ENCODE measurements at regions of chr19 and their contacts with region 1.

Region 1: DNA sequence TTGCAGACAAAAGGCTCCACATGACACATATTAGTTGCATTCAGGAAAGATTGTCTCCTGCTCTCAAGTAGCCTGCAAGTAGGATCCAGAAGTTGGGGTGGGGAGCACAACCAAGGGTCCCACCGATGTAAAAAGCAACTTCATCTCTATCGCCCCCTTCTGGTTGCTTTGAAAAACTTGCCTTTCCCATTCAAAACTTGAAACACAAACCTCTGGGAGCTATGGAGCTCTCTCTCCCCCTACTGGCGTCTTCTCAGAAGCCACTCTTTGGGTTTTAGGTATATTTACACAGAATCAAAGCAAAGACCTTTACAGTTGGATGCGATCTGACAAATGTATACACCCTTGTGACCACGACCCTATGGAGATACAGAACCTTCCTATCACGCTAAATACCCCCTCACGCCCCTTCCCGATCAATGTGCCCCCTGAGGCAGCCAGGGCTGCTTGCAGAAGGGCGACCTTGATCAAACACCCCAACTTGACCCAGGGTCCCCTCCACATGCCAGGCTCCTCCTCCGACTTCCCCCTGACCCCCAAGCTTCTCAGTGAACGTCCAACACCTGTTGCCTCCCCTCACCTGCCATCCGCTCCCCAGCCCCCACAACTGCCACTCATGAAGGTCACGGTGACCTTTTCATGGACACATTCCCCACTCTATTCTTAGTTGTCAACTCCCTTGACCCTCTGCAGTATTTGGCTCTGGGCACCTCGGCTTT is 10.1 kb downstream of the NOSIP start:
- DNase-seq: peak in 9 of 10 donors; percentile 62 to 88 (median 79)
- ATAC-seq: peak; percentile 13 to 14
- H3K4me3 Mint-ChIP-seq: peak overlapping the region in 9 of 10 donors; percentile 29 to 84 (median 68)
- H3K27ac Mint-ChIP-seq: peak overlapping the region; percentile 83 to 99 (median 96)
- H3K4me1 Mint-ChIP-seq: peaks cover 19 to 59% (median 56%) of the 10 kb centered on the region in 4 donors
- H3K27me3 Mint-ChIP-seq: peaks cover 0 to 2% (median 0%) of the 10 kb centered on the region in 5 donors

Region 2: DNA sequence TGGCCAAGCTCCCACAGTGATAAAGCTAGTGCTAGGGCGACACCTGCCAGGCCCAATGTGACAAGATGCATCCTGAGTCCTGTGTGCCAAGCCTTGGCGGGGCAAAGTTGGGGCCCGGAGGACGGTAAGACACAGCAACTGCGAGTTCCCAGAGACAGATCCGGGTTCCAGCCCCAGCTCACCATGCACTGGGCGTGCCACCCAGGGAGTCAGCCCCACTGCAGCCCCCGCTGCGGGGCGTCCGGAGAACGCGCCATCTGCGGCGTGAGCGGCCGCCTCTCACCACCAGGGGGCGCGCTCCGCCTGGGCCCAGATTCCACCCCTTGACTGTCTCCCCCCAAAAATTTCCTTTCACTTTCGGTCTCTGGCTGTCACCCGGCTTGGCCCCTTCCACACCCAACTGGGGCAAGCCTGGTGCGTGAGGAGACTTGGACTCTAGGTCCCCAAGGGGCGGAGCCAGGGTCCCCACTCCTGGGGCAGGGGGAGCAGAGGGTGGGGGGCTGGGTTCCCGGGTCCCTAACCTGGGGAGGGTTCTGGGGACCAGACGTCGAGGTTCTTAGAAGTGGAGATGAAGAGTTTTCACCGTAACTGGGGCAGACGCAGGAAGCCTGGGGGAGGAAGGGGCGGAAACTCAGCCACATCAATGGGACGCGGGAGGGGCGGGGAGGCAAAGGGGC is 96.3 kb before region 1 on chr19 and contains the start of gene FLT3LG:
- POLR2A ChIA-PET with region 1: interaction called, 12 read pairs
- DNase-seq: peak; percentile 87 to 98 (median 94)
- ATAC-seq: peak; percentile 46 to 62
- H3K4me3 Mint-ChIP-seq: peak within 1 kb of the TSS; percentile 93 to 99 (median 96)
- H3K27ac Mint-ChIP-seq: peak within 1 kb of the TSS; percentile 92 to 100 (median 98)
- H3K4me1 Mint-ChIP-seq: peaks cover 28 to 72% (median 65%) of the 10 kb centered on the region in 4 donors
- H3K27me3 Mint-ChIP-seq: no peaks in the 10 kb centered on the region
- polyA plus RNA-seq, gene FLT3LG: 108 to 205 (median 166) TPM

Region 3: GRCh38 chr19:49512970-49513745 is 57.1 kb before region 1 on chr19:
- POLR2A ChIA-PET with region 1: interaction called, 10 read pairs
- DNase-seq: peak in 1 of 10 donors; percentile 27
- ATAC-seq: peak; percentile 73 to 81
- H3K4me3 Mint-ChIP-seq: peak overlapping the region; percentile 79 to 95 (median 90)
- H3K27ac Mint-ChIP-seq: peak overlapping the region in 9 of 10 donors; percentile 77 to 96 (median 90)
- H3K4me1 Mint-ChIP-seq: peaks cover 17 to 44% (median 41%) of the 10 kb centered on the region in 4 donors
- H3K27me3 Mint-ChIP-seq: no peaks in the 10 kb centered on the region

Region 4: DNA sequence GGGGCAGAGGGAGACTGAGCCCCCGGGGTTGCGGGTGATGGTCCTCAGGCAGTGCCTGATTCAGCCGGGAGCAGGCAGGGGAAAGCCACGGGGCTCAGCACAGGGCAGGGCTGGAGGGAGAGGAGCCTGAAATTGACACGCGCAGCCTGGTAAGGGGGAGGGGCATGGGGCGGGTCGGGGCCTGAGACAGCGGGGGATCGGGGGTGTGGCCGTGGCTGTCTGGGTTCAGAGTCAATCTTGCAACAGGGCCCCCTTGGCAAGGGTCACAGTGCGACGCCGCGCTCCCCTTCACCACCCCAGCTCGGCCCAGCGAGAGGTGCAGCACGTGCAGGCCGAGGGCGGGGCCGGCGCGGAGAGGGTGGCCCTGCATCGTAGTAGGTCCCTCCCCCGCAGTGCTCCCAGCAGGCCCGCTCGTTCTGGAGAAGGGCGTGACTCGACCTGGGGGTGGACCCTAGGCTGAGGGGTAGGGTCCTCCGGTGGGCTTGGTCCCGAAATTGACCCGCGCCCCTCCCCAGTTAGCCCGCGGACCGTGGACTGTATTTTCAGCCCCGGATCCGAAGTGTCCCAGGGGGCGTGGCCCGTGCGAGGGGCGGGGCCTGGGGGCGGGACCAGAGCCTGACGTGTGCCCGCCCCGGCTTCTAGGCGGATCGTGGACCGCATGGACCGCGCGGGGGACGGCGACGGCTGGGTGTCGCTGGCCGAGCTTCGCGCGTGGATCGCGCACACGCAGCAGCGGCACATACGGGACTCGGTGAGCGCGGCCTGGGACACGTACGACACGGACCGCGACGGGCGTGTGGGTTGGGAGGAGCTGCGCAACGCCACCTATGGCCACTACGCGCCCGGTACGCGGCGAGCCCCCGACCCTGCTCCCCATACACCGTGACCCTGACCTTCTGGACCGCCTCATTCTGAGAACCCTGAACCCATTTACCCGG is 36.5 kb before region 1 on chr19:
- POLR2A ChIA-PET with region 1: interaction called, 25 read pairs
- DNase-seq: peak; percentile 73 to 97 (median 87)
- ATAC-seq: peak; percentile 92 to 93
- H3K4me3 Mint-ChIP-seq: peak overlapping the region; percentile 77 to 93 (median 88)
- H3K27ac Mint-ChIP-seq: peak overlapping the region in 8 of 10 donors; percentile 48 to 91 (median 80)
- H3K4me1 Mint-ChIP-seq: peaks cover 16 to 28% (median 25%) of the 10 kb centered on the region in 4 donors
- H3K27me3 Mint-ChIP-seq: no peaks in the 10 kb centered on the region

Region 5: GRCh38 chr19:49546825-49547565 is 23.3 kb before region 1 on chr19:
- POLR2A ChIA-PET with region 1: interaction called, 757 read pairs
- DNase-seq: peak in 9 of 10 donors; percentile 49 to 87 (median 68)
- ATAC-seq: peak; percentile 75 to 81
- H3K4me3 Mint-ChIP-seq: peak overlapping the region; percentile 62 to 84 (median 78)
- H3K27ac Mint-ChIP-seq: peak overlapping the region; percentile 56 to 86 (median 82)
- H3K4me1 Mint-ChIP-seq: peaks cover 27 to 58% (median 49%) of the 10 kb centered on the region in 4 donors
- H3K27me3 Mint-ChIP-seq: no peaks in the 10 kb centered on the region

Region 6: DNA sequence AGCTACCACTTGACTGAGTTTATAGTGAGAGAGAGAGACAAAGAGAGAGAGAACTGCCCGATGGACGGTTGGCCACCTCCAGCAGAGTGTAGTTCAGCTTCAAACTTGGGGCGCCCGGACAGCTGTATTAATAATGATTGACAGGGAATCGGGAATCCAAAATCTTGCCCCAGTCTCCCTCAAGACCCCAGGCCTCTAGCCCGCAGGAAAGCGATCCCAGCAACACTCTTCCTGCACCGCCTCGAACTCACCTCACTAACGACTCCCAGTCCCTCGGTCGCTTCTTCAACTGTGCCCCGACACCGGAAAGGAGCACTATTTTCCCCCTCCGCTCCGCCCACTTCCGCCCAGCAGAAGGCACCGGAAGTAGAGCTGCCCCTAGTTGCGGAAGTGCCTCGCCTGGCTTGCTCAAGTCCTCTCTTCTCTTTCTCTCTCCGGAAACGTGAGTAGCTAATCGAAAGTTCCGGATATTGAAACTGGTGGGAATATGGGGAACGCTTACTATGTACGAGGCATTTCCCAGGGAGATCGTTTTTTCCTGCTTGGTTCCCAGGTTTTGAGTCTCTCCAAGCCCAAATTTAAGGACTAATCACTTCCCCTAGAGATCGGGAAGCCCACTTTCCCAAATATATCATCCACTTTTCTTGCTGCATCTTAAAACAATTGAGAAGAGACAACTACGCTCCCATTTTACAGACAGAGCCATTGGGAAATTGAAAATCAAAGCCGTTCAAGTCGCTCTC is 10.1 kb after region 1 on chr19 and contains the start of gene NOSIP:
- POLR2A ChIA-PET with region 1: interaction called, 24 read pairs
- DNase-seq: peak; percentile 88 to 98 (median 96)
- ATAC-seq: peak; percentile 98 to 99
- H3K4me3 Mint-ChIP-seq: peak within 1 kb of the TSS; percentile 90 to 98 (median 94)
- H3K27ac Mint-ChIP-seq: peak within 1 kb of the TSS; percentile 89 to 97 (median 93)
- H3K4me1 Mint-ChIP-seq: peaks cover 14 to 44% (median 36%) of the 10 kb centered on the region in 4 donors
- H3K27me3 Mint-ChIP-seq: no peaks in the 10 kb centered on the region
- polyA plus RNA-seq, gene NOSIP: 662 to 854 (median 844) TPM

Region 7: GRCh38 chr19:49590071-49590970 is 20.0 kb after region 1 on chr19:
- POLR2A ChIA-PET with region 1: interaction called, 26 read pairs
- DNase-seq: peak; percentile 89 to 99 (median 98)
- ATAC-seq: peak; percentile 78 to 82
- H3K4me3 Mint-ChIP-seq: peak overlapping the region; percentile 86 to 97 (median 92)
- H3K27ac Mint-ChIP-seq: peak overlapping the region; percentile 34 to 97 (median 92)
- H3K4me1 Mint-ChIP-seq: peaks cover 22 to 46% (median 34%) of the 10 kb centered on the region in 4 donors
- H3K27me3 Mint-ChIP-seq: no peaks in the 10 kb centered on the region